CD8-positive, alpha-beta memory T cell (primary cell): ENCODE measurements at regions of chr11 and their contacts with region 1.

Region 1: DNA sequence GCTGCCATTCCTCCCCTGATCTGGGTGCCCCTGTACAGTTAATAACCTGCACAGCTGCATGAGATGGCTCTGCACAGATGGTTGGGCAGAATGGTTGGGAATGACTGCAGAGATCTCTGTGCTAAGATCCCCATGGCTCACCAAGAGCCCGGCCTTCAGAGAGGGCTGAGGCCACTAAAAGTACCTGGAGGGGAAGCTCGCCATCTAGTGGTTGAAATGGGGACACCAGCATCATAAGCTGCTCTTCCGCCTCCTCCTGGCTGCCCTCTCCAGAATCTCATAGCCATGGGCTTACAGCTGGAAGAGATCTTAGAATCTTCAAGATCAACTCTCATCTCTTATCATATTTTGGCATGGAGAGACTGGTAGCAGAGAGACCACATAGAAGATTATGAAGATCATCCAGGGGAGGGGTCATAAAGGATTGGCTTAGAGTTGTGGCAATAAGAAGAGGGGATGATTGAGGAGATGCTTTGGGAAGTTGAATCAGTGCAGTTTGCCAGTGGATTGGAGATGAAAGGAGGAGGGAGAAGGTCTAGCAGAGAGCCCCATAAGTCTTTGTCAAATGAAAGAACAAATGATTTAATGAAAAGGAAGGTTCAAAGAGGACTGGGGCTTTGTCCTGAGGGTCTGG is 22.0 kb upstream of the TLCD5 start:
- DNase-seq: peak; percentile 24 to 61 (median 36)
- H3K4me3 ChIP-seq: no peak overlapping the region
- H3K4me3 Mint-ChIP-seq: no peak overlapping the region
- H3K27ac ChIP-seq: no peak overlapping the region
- H3K27ac Mint-ChIP-seq: no peak overlapping the region
- H3K4me1 ChIP-seq: no peaks in the 10 kb centered on the region
- H3K4me1 Mint-ChIP-seq: no peaks in the 10 kb centered on the region
- H3K27me3 ChIP-seq: peaks cover 4% of the 10 kb centered on the region
- H3K27me3 Mint-ChIP-seq: peaks cover 13 to 50% of the 10 kb centered on the region in 2 donors

Region 2: GRCh38 chr11:120223793-120224192 is 79.3 kb before region 1 on chr11:
- CTCF ChIA-PET with region 1: no interaction called
- POLR2A ChIA-PET with region 1: no interaction called
- DNase-seq: no peak
- H3K4me3 ChIP-seq: no peak overlapping the region
- H3K4me3 Mint-ChIP-seq: no peak overlapping the region
- H3K27ac ChIP-seq: no peak overlapping the region
- H3K27ac Mint-ChIP-seq: no peak overlapping the region
- H3K4me1 ChIP-seq: no peaks in the 10 kb centered on the region
- H3K4me1 Mint-ChIP-seq: peaks cover 0 to 7% (median 2%) of the 10 kb centered on the region in 3 donors
- H3K27me3 ChIP-seq: no peaks in the 10 kb centered on the region
- H3K27me3 Mint-ChIP-seq: peaks cover 4 to 6% of the 10 kb centered on the region in 2 donors

Region 3: GRCh38 chr11:120235024-120235861 is 67.9 kb before region 1 on chr11:
- CTCF ChIA-PET with region 1: interaction called, 39 read pairs
- POLR2A ChIA-PET with region 1: no interaction called
- DNase-seq: peak in 4 of 5 donors; percentile 8 to 56 (median 26)
- H3K4me3 ChIP-seq: no peak overlapping the region
- H3K4me3 Mint-ChIP-seq: no peak overlapping the region
- H3K27ac ChIP-seq: no peak overlapping the region
- H3K27ac Mint-ChIP-seq: no peak overlapping the region
- H3K4me1 ChIP-seq: no peaks in the 10 kb centered on the region
- H3K4me1 Mint-ChIP-seq: peaks cover 0 to 1% (median 0%) of the 10 kb centered on the region in 3 donors
- H3K27me3 ChIP-seq: peaks cover 8% of the 10 kb centered on the region
- H3K27me3 Mint-ChIP-seq: peaks cover 14 to 51% of the 10 kb centered on the region in 2 donors